ENCODE measurements at regions of chr11 and their contacts with region 1.

Region 1: DNA sequence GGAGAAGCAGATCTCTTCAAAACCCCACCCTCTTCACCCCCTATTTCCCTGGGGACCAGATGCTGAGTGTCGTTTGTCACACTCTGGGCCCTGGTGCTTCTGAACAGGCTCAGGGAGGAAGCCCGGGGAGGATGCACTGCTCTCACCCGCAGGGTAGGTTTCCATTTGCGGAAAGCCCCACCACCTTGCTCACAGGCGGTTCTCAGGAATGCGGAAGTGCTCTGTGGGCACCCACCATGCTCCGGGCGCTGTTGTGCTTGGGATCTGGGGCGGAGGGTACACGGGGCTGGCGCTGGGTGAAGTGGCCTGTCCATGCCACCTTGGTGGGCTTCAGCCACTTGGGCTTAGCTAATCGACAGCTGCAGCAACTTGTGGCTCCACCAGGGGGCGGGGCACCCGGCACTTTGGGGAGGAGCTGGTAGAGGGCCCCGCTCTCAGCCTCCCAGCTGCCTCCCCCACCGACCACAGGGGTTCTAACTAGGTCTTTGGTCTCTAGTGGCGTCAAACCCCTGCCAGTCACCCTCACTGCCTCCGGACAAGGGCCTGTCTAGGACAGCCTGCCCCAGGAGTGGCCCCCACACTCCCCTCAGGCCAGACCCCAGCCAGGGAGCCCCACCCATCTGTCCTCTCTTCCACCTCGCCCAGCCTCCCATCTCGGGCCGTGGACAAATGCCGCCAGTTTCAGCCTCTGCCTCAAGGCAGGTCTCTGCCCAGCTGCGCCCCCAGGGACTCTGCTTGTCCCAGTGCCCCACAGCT is 7.4 kb downstream of the NDUFV1 start:
- DNase-seq: peak; percentile 90
- H3K4me3 Mint-ChIP-seq: peak overlapping the region; percentile 71
- H3K27ac Mint-ChIP-seq: peak overlapping the region; percentile 96
- H3K4me1 Mint-ChIP-seq: peaks cover 36% of the 10 kb centered on the region
- H3K27me3 Mint-ChIP-seq: peaks cover 3% of the 10 kb centered on the region

Region 2: GRCh38 chr11:67561971-67562619 is 52.0 kb before region 1 on chr11:
- CTCF ChIA-PET with region 1: no interaction called
- POLR2A ChIA-PET with region 1: no interaction called
- DNase-seq: no peak
- H3K4me3 Mint-ChIP-seq: no peak overlapping the region
- H3K27ac Mint-ChIP-seq: no peak overlapping the region
- H3K4me1 Mint-ChIP-seq: peaks cover 11% of the 10 kb centered on the region
- H3K27me3 Mint-ChIP-seq: peaks cover 26% of the 10 kb centered on the region

Region 3: GRCh38 chr11:67648140-67649123 is 34.3 kb after region 1 on chr11:
- CTCF ChIA-PET with region 1: interaction called, 10 read pairs
- POLR2A ChIA-PET with region 1: interaction called, 15 read pairs
- DNase-seq: peak; percentile 60
- H3K4me3 Mint-ChIP-seq: no peak overlapping the region
- H3K27ac Mint-ChIP-seq: no peak overlapping the region
- H3K4me1 Mint-ChIP-seq: peaks cover 45% of the 10 kb centered on the region
- H3K27me3 Mint-ChIP-seq: peaks cover 10% of the 10 kb centered on the region

Region 4: DNA sequence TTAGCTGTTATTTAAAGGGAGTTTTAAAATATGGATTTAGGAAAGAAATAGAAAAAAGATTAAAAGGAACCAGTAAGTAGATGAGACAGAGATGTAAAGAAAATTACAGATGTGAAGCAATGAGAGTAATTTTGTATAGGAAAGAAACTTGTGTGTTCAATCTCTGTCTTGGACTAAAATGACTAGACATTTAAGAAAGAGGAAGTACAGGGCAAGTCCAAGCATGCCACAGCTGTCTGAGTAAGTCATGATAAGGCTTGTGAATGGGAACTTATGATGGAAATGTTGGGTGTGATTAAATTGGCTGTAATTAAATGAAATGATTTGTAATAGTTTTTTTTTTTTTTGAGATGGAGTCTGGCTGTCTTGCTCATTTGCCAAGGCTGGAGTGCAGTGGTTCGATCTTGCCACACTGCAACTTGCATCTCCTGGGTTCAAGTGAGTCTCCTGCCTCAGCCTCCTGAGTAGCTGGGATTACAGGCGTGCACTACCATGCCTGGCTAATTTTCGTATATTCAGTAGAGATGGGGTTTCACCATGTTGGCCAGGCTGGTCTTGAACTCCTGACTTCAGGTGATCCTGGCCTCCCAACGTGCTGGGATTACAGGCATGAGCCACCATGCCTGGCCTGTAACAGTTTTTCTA is 42.3 kb after region 1 on chr11:
- CTCF ChIA-PET with region 1: interaction called, 11 read pairs
- POLR2A ChIA-PET with region 1: interaction called, 15 read pairs
- DNase-seq: no peak
- H3K4me3 Mint-ChIP-seq: no peak overlapping the region
- H3K27ac Mint-ChIP-seq: no peak overlapping the region
- H3K4me1 Mint-ChIP-seq: peaks cover 12% of the 10 kb centered on the region
- H3K27me3 Mint-ChIP-seq: peaks cover 14% of the 10 kb centered on the region

Measured in activated CD4-positive, alpha-beta memory T cell treated with anti-CD3 and anti-CD28 coated beads, Interleukin-2, amount 10 ng/mL, durations not matched to agents 7 days and 5 days (primary cell).